Activated naive CD4-positive, alpha-beta T cell treated with anti-CD3 and anti-CD28 coated beads for 36 hours (primary cell): ENCODE measurements at regions of chr2 and their contacts with region 1.

Region 1: DNA sequence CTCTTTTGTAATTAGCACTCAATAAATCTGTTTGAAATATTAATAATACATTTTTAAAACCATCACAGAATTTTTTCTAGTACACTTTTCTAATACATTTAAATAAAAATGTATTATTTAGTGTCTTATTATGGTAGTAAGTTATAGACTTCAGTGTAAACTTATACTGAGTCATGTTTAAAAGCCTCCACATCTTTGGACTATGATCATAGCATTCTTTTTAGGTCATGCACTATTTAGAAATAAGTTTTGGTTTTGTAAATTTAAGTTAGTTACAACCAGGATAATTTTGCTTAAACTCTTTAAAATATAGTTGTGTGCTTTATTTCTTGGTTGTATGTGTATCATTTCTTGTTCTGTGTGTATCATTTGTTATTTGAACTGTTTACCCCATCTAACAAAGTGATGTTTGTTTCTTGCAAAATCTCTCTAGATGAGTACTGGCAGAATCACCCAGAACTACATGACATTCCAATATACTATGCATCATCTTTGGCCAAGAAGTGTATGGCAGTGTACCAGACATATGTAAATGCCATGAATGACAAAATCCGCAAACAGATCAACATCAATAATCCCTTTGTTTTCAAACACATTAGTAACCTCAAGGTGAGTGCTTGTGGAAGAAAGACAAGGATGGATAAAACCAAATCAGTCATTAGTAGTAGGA is 16.7 kb downstream of the CPSF3 start:
- DNase-seq: no peak
- H3K4me3 Mint-ChIP-seq: no peak overlapping the region
- H3K27ac Mint-ChIP-seq: no peak overlapping the region
- H3K4me1 Mint-ChIP-seq: no peaks in the 10 kb centered on the region
- H3K27me3 Mint-ChIP-seq: no peaks in the 10 kb centered on the region

Region 2: GRCh38 chr2:9463698-9464034 is 23.5 kb after region 1 on chr2:
- CTCF ChIA-PET with region 1: no interaction called
- intact Hi-C with region 1: loop called (anchors 2 kb)
- DNase-seq: peak; percentile 14
- H3K4me3 Mint-ChIP-seq: no peak overlapping the region
- H3K27ac Mint-ChIP-seq: no peak overlapping the region
- H3K4me1 Mint-ChIP-seq: no peaks in the 10 kb centered on the region
- H3K27me3 Mint-ChIP-seq: no peaks in the 10 kb centered on the region